Right cardiac atrium (tissue), 5 donors: ENCODE measurements at regions of chr14 and their contacts with region 1.

Region 1: GRCh38 chr14:53953002-53953827 is 3.4 kb downstream of the BMP4 start:
- DNase-seq: peak; percentile 88 to 96 (median 96)
- ATAC-seq: peak; percentile 94 to 95
- H3K4me3 ChIP-seq: peak overlapping the region; percentile 84
- H3K27ac ChIP-seq: peak overlapping the region; percentile 86
- H3K4me1 ChIP-seq: no peaks in the 10 kb centered on the region
- H3K27me3 ChIP-seq: no peaks in the 10 kb centered on the region

Region 2: GRCh38 chr14:53458368-53458814 is 494.8 kb before region 1 on chr14:
- intact Hi-C with region 1: no loop called
- DNase-seq: no peak
- ATAC-seq: no peak
- H3K4me3 ChIP-seq: no peak overlapping the region
- H3K27ac ChIP-seq: no peak overlapping the region
- H3K4me1 ChIP-seq: no peaks in the 10 kb centered on the region
- H3K27me3 ChIP-seq: no peaks in the 10 kb centered on the region

Region 3: DNA sequence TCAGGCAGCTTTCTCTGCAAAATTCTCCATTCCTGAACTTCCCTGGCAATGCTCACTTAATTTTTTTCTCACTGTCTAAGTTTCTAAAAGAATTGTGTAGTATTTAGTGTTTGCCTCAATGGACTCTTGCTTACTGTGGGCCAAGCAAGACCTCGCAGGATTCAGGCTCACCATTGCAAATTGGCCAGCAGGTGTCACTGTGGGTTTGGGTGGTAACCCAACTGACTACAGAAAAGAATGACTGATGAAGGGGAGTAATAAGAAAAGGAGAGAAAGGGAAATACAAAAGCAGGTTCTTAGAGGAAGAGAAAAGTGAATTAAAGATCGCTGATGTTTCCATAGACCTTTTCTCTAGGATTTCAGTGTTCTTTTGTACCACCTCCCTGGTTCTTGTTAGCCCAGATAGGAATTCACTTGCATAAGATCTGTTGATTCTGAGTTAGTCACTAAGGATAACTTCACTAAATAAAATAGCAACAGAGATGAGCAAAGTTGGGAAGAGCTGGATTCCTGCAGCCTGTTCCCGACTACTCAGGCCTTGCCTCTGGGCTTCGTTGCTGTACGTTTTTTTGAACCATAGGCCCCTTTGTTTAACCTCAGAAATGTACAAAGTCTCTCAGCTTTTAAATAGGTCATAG is 413.6 kb before region 1 on chr14:
- intact Hi-C with region 1: loop called in 1 of 4 experiments (anchors 10 kb)
- DNase-seq: peak; percentile 73 to 87 (median 83)
- ATAC-seq: peak; percentile 79 to 90
- H3K4me3 ChIP-seq: no peak overlapping the region
- H3K27ac ChIP-seq: no peak overlapping the region
- H3K4me1 ChIP-seq: peaks cover 3% of the 10 kb centered on the region
- H3K27me3 ChIP-seq: no peaks in the 10 kb centered on the region

Region 4: GRCh38 chr14:54058505-54058904 is 105.3 kb after region 1 on chr14:
- intact Hi-C with region 1: no loop called
- DNase-seq: no peak
- ATAC-seq: no peak
- H3K4me3 ChIP-seq: no peak overlapping the region
- H3K27ac ChIP-seq: no peak overlapping the region
- H3K4me1 ChIP-seq: no peaks in the 10 kb centered on the region
- H3K27me3 ChIP-seq: no peaks in the 10 kb centered on the region

Region 5: GRCh38 chr14:54152351-54152750 is 199.1 kb after region 1 on chr14:
- intact Hi-C with region 1: no loop called
- DNase-seq: no peak
- ATAC-seq: no peak
- H3K4me3 ChIP-seq: no peak overlapping the region
- H3K27ac ChIP-seq: no peak overlapping the region
- H3K4me1 ChIP-seq: no peaks in the 10 kb centered on the region
- H3K27me3 ChIP-seq: no peaks in the 10 kb centered on the region

Region 6: GRCh38 chr14:54329082-54329695 is 376.0 kb after region 1 on chr14:
- intact Hi-C with region 1: loop called in 1 of 4 experiments (anchors 10 kb)
- DNase-seq: peak; percentile 20 to 70 (median 55)
- ATAC-seq: peak; percentile 78 to 84
- H3K4me3 ChIP-seq: no peak overlapping the region
- H3K27ac ChIP-seq: no peak overlapping the region
- H3K4me1 ChIP-seq: no peaks in the 10 kb centered on the region
- H3K27me3 ChIP-seq: no peaks in the 10 kb centered on the region